GM13976 (cell line): ENCODE measurements at regions of chr3 and their contacts with region 1.

Region 1: GRCh38 chr3:10738688-10739372 is 77.2 kb upstream of the SLC6A11 start:
- DNase-seq: peak; percentile 72
- CTCF ChIP-seq: peak; percentile 63

Region 2: DNA sequence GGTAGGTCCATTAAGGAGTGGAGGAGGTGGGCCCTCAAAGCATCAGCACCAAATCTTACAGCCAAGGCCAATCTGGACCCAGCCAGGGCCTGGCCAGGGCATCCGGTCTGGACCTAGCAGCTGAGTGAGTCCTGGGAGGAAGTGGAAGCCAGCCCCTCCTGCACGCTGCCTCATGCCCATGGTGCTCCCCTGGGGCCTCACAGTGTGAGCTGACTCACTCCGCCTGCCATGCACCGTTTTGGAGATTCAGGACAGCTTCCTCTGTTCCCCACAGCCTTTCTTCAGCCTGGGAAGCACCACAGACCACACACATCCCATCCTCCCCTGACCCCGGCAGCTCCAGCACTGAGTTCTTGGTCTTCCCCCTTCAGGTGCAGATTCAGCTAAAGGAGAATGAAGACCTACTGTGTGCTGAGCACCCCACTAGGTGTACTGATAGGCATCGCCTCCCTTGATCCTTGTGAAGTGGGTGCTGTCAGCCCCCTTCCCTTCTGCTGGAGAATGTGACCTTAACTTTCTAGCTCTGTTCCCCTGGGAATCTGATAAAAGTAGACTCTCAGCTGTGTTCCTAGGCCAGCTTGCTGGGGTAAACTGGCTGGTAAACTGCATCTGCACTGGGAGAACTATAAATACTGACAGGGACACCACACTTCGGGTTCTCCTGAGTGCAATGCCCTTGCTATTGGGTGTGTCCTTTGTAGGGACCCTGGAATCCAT is 381.1 kb before region 1 on chr3:
- in situ Hi-C with region 1: loop called (anchors 25 kb)
- DNase-seq: no peak
- CTCF ChIP-seq: no peak